GM13977 (cell line): ENCODE measurements at regions of chr1 and their contacts with region 1.

Region 1: DNA sequence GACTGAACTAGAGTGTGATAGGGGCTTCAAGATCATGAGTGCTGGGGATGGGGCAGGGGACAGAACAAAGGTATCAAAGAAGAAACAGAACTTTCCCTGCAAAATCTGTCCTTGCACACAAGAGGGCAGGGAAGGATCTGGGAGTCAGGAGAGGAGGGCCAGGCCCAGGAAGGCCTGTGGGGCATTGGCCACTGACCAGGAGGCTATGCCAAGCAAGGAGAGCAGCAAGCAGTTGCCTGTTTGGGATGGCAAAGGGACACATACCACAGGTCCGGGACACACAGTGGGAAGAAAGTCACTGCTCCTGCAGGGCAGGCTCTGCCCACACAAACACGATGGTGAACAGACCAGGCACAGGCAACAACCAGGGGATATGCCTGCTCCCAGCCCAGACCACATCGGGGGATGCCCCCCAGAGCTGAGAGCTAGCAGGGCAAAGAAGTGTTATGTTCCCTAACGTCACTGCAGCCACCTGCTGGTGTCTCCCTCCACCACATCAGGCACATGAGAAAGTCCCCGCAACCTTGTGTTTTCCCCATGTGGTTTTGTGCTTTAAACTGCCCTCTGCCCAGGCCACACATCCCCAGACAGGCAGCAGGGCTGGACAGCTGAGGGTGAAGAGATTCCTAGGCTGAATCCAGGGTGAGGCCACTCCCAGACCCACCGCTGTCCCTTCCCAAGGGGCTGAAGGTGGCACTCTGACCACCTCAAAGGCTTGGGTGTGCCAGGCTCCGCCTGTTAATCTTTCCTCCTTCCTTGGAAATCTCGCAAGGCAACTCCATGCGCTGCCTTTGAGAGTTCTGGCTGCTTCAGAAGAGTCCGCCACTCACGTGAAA is 53.6 kb downstream of the KIF21B start:
- DNase-seq: peak; percentile 91
- CTCF ChIP-seq: peak; percentile 57

Region 2: DNA sequence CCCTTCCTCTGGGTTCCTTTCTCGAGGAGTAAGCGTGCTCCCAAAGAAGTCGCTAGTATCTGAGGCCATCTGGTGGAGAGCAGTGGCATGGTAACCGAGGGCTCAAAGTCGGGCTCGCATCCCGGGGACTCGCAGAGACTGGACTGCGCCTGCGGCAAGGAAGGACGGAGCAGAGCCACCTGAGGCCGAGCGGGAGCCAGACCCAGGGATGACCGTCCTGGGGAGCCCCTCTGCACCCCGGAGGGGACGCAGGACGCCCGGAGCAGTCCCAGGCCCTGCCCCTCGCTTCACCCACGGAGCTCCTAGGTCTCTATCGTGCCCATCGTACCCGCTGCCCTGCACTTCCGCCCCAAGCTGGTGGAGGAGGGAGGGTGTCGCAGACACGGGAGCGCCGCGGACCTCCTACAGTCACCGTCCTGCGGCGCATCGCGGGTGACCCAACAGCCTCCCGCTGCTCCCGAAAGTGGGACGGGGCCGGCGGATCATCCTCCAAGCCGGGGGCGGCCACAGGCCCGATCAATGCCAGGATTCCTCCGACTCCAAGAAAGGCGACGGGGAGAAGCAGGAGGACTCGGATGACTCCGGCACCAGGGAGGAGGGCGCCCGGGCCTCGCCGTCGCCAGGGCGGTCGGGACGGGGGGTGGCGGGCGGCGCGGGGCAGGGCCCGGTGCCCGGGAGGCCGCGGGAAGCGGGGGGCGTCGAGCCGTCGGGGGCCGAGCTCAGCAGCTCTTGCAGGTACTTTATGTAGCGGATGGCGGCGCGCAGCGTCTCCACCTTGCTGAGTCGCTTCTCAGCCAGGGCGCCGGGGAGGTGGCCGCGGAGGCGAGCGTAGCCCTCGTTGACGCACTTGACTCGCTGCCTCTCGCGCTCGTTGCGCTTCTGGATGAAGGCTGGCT is 144.5 kb after region 1 on chr1:
- in situ Hi-C with region 1: loop called (anchors 10 kb)
- DNase-seq: peak; percentile 94
- CTCF ChIP-seq: peak; percentile 87

Region 3: GRCh38 chr1:201191653-201192260 is 221.8 kb after region 1 on chr1:
- in situ Hi-C with region 1: no loop called
- DNase-seq: no peak
- CTCF ChIP-seq: no peak

Region 4: DNA sequence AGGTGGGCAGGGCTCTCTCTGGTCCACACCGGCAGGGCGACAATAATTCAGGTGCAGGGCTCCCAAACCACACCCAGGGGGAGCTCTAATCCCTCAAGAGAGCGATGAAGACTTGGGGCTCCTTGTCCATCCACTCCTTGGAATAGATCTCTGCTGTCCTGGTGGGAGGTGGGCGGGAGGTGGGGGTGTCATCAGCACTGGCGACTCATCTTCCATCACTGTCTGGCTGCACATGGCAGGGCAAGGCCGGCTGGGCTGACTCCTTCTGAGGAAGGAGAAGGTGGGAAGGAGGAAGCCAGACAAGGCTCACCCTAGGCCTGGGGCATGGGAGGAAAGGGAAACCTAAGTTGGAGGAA is 378.2 kb after region 1 on chr1:
- in situ Hi-C with region 1: no loop called
- DNase-seq: peak; percentile 79
- CTCF ChIP-seq: peak; percentile 75